Dorsolateral prefrontal cortex (tissue), 120 donors: ENCODE measurements at regions of chr2 and their contacts with region 1.

Region 1: GRCh38 chr2:20516646-20517341 is 69.9 kb downstream of the RHOB start:
- DNase-seq: peak in 8 of 10 donors; percentile 43 to 77 (median 72)
- H3K4me3 ChIP-seq: peak overlapping the region in 18 of 59 donors; percentile 1 to 52 (median 22)
- H3K27ac ChIP-seq: peak overlapping the region; percentile 84 to 99 (median 96)
- H3K27me3 ChIP-seq: no peaks in the 10 kb centered on the region
- CTCF ChIP-seq: peak in 1 of 56 donors; percentile 23

Region 2: DNA sequence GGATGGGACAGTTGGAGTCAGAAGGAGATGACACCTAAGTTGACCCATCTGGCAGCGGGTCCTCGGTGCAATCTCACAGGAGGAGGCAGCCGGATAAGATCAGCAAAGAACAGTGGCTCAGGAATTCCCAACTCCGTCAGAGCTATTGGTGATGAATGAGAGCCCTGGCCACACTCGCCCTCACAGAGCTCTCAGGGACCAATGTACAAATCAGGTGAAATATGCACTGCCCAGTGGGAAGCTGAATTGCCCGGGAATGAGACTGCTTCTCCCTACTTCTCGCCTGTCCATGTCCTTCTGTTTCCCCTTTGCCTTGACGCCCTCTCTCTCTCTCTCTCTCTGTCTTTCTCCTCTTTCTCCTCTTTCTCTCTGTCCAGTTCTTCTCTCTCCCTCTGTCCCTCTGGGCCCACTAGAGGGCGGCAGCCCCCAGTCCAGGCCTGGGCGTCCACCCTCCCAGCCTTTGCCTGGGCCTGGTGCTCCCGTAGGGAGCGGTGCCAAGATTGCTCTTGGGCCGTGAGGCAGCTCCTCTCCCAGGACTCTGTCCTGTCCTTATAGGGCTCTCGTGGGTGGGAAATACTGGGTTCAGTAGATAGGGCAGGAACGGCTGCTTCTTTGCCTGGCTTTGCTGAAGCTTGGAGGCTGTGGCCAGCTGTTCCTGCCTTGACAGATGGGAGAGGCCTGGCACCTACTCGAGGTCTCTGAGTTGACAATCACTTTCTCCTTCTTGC is 137.8 kb before region 1 on chr2:
- intact Hi-C with region 1: loop called in 1 of 2 experiments (anchors 10 kb)
- DNase-seq: peak; percentile 70 to 87 (median 80)
- H3K4me3 ChIP-seq: no peak overlapping the region
- H3K27ac ChIP-seq: peak overlapping the region in 32 of 59 donors; percentile 1 to 85 (median 54)
- H3K27me3 ChIP-seq: no peaks in the 10 kb centered on the region
- CTCF ChIP-seq: peak; percentile 31 to 93 (median 78)

Region 3: GRCh38 chr2:20452551-20452950 is 64.2 kb before region 1 on chr2:
- intact Hi-C with region 1: loop called (anchors 2 kb)
- DNase-seq: peak in 1 of 10 donors; percentile 37
- H3K4me3 ChIP-seq: peak overlapping the region in 5 of 59 donors; percentile 7 to 99 (median 96)
- H3K27ac ChIP-seq: peak overlapping the region; percentile 88 to 100 (median 99)
- H3K27me3 ChIP-seq: no peaks in the 10 kb centered on the region
- CTCF ChIP-seq: peak in 42 of 56 donors; percentile 9 to 53 (median 32)

Region 4: GRCh38 chr2:20578895-20579825 is 62.4 kb after region 1 on chr2:
- intact Hi-C with region 1: loop called (anchors 2 to 5 kb)
- DNase-seq: peak; percentile 53 to 87 (median 78)
- H3K4me3 ChIP-seq: peak overlapping the region in 8 of 59 donors; percentile 9 to 32 (median 20)
- H3K27ac ChIP-seq: peak overlapping the region; percentile 1 to 90 (median 76)
- H3K27me3 ChIP-seq: no peaks in the 10 kb centered on the region
- CTCF ChIP-seq: peak in 4 of 56 donors; percentile 9 to 29 (median 12)

Region 5: GRCh38 chr2:20617892-20618467 is 101.2 kb after region 1 on chr2:
- intact Hi-C with region 1: loop called in 1 of 2 experiments (anchors 5 kb)
- DNase-seq: peak; percentile 85 to 96 (median 94)
- H3K4me3 ChIP-seq: peak overlapping the region in 2 of 59 donors; percentile 2 to 18
- H3K27ac ChIP-seq: peak overlapping the region; percentile 79 to 99 (median 94)
- H3K27me3 ChIP-seq: no peaks in the 10 kb centered on the region
- CTCF ChIP-seq: peak in 52 of 56 donors; percentile 16 to 70 (median 54)